GM12878 (cell line): ENCODE measurements at regions of chr7 and their contacts with region 1.

Region 1: DNA sequence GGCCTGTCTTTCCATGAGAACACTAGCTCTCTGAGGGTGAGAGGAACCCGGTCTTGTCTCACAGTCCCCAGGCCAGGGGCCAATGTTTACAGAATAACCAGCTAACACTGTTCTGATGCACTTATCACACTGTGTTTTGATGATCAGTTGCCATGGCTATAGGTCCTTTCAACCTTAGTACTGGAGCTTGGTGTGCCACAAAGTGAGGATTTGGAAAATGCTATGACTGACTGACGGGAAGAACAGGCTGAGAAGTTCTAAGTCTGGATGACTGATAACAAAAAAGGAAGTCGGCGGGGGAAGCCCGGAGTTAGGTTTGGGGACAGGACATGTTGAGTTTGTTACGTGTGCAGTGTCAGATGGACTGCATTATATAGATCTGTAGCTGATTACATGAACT is 141.8 kb downstream of the CTTNBP2 start:
- DNase-seq: peak; percentile 66
- ATAC-seq: peak; percentile 86
- H3K4me3 ChIP-seq: no peak overlapping the region
- H3K27ac ChIP-seq: no peak overlapping the region
- H3K4me1 ChIP-seq: no peaks in the 10 kb centered on the region
- H3K27me3 ChIP-seq: no peaks in the 10 kb centered on the region; a peak in 1 of 4 replicates
- CTCF ChIP-seq: no peak
- EP300 ChIP-seq: peak; percentile 54 to 80; a peak in 3 of 4 replicates
- POLR2A ChIP-seq: no peak
- RAD21 ChIP-seq: no peak

Region 2: GRCh38 chr7:117659453-117660086 is 71.9 kb before region 1 on chr7:
- CTCF ChIA-PET with region 1: no interaction called
- POLR2A ChIA-PET with region 1: no interaction called
- RAD21 ChIA-PET with region 1: no interaction called
- SMC1A ChIA-PET with region 1: no interaction called
- in situ Hi-C with region 1: no loop called
- intact Hi-C with region 1: no loop called
- DNase-seq: no peak
- ATAC-seq: no peak
- H3K4me3 ChIP-seq: no peak overlapping the region
- H3K27ac ChIP-seq: no peak overlapping the region
- H3K4me1 ChIP-seq: no peaks in the 10 kb centered on the region
- H3K27me3 ChIP-seq: no peaks in the 10 kb centered on the region
- CTCF ChIP-seq: no peak
- EP300 ChIP-seq: no peak
- POLR2A ChIP-seq: no peak
- RAD21 ChIP-seq: no peak

Region 3: GRCh38 chr7:117777335-117778150 is 46.1 kb after region 1 on chr7:
- CTCF ChIA-PET with region 1: interaction called, 3 read pairs
- POLR2A ChIA-PET with region 1: interaction called, 4 read pairs
- RAD21 ChIA-PET with region 1: interaction called, 10 read pairs
- SMC1A ChIA-PET with region 1: interaction called, 33 read pairs
- in situ Hi-C with region 1: no loop called
- intact Hi-C with region 1: no loop called
- DNase-seq: no peak
- ATAC-seq: no peak
- H3K4me3 ChIP-seq: no peak overlapping the region
- H3K27ac ChIP-seq: no peak overlapping the region
- H3K4me1 ChIP-seq: peaks cover 30% of the 10 kb centered on the region
- H3K27me3 ChIP-seq: no peaks in the 10 kb centered on the region
- CTCF ChIP-seq: no peak
- EP300 ChIP-seq: no peak
- POLR2A ChIP-seq: no peak
- RAD21 ChIP-seq: no peak